ENCODE measurements at regions of chr1 and their contacts with region 1.

Region 1: DNA sequence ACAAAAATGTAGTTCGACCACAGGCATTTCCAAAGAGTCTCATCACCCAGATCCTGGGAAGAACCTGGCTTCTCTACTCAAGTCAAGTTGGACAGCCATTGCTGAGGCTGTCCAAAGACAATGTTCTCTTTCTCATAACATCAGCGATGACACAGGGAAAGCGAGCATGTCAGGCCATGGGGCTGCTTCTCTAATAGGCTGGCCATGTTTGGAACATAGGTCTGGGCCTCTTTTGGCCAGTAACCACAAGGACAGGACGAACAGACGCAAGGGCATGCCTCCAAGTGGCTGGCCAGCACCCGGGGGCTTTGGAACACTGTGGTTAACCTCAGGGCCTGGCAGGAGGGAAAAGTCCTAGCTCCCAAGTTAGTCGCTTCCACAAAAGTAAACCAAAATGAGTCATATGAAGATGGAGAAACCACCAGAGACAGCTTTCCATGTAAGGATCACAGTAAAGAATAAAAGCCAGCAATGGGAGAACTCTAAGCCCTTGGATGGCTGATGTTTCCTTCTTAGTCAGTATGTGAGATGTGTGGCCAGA is 80.6 kb upstream of the SLC44A3 start:
- DNase-seq: peak; percentile 76
- ATAC-seq: peak; percentile 52
- H3K4me3 ChIP-seq: no peak overlapping the region
- H3K27ac ChIP-seq: no peak overlapping the region
- H3K4me1 ChIP-seq: peaks cover 22% of the 10 kb centered on the region
- H3K27me3 ChIP-seq: no peaks in the 10 kb centered on the region
- CTCF ChIP-seq: no peak

Region 2: DNA sequence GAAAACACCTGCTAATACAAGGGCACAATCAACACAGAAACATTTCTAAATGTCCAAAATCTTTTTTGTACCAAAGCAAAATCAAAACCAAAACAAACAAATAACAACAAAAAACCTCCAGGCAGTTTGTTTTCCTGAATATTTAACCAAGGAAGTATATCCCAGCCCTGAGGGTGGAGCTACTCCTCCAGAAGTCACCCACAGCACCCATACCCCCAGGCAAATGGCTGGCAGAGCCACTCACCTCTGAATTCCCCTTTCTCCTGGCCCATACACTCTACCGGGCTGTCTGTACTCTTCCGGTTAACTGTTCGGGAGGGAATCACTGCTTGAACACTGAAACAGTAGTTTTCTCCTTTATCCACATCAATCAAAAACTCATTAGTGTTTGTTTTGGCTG is 207.5 kb before region 1 on chr1:
- CTCF ChIA-PET with region 1: no interaction called
- POLR2A ChIA-PET with region 1: no interaction called
- intact Hi-C with region 1: loop called (anchors 5 kb)
- DNase-seq: peak; percentile 67
- ATAC-seq: peak; percentile 93
- H3K4me3 ChIP-seq: no peak overlapping the region
- H3K27ac ChIP-seq: no peak overlapping the region
- H3K4me1 ChIP-seq: peaks cover 15% of the 10 kb centered on the region; the same call in 1 of the 2 replicates
- H3K27me3 ChIP-seq: no peaks in the 10 kb centered on the region
- CTCF ChIP-seq: peak; percentile 62

Region 3: DNA sequence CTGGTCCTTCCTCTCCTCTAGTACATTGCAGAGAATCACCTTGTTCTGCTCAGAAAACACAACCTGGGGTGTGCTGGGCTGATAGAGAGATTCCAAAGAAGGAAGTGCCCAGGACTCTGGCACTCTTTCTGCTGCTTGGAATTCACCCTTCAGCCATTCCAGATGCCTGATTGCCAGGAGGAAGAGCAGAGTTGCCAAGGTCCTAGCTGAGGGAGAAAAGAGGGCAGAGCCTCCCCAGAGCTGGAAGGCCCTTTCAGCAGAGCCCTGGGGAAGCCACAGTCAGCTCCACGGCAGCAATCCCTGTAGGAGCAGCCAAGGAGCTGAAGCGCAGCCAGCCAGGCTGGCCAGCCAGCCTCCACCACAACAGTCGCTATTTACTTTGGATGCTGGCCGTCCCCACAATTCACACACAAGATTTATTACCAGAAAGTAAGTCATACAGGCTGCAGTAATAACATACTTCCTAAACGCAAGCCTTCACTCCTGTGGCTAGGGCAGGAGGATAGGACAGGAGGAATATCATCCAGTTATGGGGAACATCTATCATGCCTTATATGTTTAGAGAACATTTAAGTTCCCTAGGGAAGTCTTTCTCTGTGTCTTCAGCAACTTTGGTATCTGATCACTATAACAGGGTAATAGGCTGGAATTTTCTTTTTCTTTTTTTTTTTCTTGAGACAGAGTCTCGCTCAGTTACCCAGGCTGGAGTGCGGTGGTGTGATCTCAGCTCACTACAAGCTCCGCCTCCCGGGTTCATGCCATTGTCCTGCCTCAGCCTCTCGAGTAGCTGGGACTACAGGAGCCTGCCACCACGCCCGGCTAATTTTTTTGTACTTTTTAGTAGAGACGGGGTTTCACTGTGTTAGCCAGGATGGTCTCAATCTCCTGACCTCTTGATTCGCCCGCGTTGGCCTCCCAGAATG is 44.0 kb after region 1 on chr1:
- CTCF ChIA-PET with region 1: no interaction called
- POLR2A ChIA-PET with region 1: no interaction called
- intact Hi-C with region 1: loop called (anchors 5 kb)
- DNase-seq: peak; percentile 80
- ATAC-seq: peak; percentile 99
- H3K4me3 ChIP-seq: no peak overlapping the region
- H3K27ac ChIP-seq: no peak overlapping the region
- H3K4me1 ChIP-seq: peaks cover 16% of the 10 kb centered on the region
- H3K27me3 ChIP-seq: no peaks in the 10 kb centered on the region
- CTCF ChIP-seq: no peak

Measured in PC-3 (cell line).